Panc1 (cell line): ENCODE measurements at regions of chr7 and their contacts with region 1.

Region 1: DNA sequence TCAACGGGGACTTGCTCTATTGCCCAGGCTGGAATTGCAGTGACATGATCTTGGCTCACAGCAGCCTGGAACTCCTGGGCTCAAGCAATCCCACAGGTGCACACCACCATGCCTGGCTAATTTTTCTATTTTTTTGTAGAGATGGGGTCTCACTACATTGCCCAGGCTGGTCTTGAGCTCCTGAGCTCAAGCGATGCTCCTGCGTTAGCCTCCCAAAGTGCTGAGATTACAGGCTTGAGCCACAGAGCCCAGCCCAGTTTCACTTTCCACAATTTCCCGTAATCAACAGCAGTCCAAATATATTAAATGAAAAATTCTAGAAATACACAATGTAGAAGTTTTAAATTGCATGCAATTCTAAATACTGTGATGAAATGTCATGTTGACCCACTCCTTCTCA is 24.0 kb downstream of the SEPTIN14 start:
- DNase-seq: no peak
- ATAC-seq: no peak
- H3K4me3 ChIP-seq: no peak overlapping the region; a peak in 1 of 4 replicates
- H3K27ac ChIP-seq: no peak overlapping the region
- H3K4me1 ChIP-seq: no peaks in the 10 kb centered on the region
- H3K27me3 ChIP-seq: no peaks in the 10 kb centered on the region
- CTCF ChIP-seq: no peak

Region 2: DNA sequence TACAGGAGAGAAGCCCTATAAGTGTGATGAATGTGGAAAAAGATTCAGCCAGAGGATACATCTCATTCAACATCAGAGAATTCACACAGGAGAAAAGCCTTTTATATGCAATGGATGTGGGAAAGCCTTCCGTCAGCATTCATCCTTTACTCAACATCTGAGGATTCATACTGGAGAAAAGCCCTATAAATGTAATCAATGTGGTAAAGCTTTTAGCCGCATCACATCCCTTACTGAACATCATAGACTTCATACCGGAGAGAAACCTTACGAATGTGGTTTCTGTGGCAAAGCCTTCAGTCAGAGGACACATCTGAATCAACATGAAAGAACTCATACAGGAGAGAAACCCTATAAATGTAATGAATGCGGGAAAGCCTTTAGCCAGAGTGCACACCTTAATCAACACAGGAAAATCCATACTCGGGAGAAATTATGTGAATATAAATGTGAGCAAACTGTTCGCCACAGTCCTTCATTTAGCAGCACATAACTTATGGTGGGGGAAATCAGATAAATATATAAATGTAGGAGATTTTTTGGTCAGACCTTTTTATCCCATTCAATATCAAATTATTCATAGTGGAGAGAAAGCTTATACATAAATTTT is 101.0 kb after region 1 on chr7:
- CTCF ChIA-PET with region 1: no interaction called
- POLR2A ChIA-PET with region 1: no interaction called
- in situ Hi-C with region 1: no loop called
- intact Hi-C with region 1: loop called (anchors 10 kb)
- DNase-seq: no peak
- ATAC-seq: no peak
- H3K4me3 ChIP-seq: no peak overlapping the region
- H3K27ac ChIP-seq: no peak overlapping the region
- H3K4me1 ChIP-seq: no peaks in the 10 kb centered on the region
- H3K27me3 ChIP-seq: no peaks in the 10 kb centered on the region
- CTCF ChIP-seq: no peak

Region 3: GRCh38 chr7:56079450-56080185 is 241.0 kb after region 1 on chr7:
- CTCF ChIA-PET with region 1: no interaction called
- POLR2A ChIA-PET with region 1: no interaction called
- in situ Hi-C with region 1: no loop called
- intact Hi-C with region 1: no loop called
- DNase-seq: no peak
- ATAC-seq: peak; percentile 86
- H3K4me3 ChIP-seq: no peak overlapping the region
- H3K27ac ChIP-seq: peak overlapping the region; percentile 5
- H3K4me1 ChIP-seq: peaks cover 14% of the 10 kb centered on the region
- H3K27me3 ChIP-seq: no peaks in the 10 kb centered on the region
- CTCF ChIP-seq: peak; percentile 93